Transverse colon (tissue), 4 donors: ENCODE measurements at regions of chr15 and their contacts with region 1.

Region 1: GRCh38 chr15:91782221-91782620 is 71.3 kb upstream of the SLCO3A1 start:
- DNase-seq: no peak
- H3K4me3 ChIP-seq: no peak overlapping the region
- H3K27ac ChIP-seq: no peak overlapping the region
- H3K4me1 ChIP-seq: no peaks in the 10 kb centered on the region
- H3K27me3 ChIP-seq: no peaks in the 10 kb centered on the region
- CTCF ChIP-seq: no peak
- EP300 ChIP-seq: no peak
- POLR2A ChIP-seq: no peak

Region 2: DNA sequence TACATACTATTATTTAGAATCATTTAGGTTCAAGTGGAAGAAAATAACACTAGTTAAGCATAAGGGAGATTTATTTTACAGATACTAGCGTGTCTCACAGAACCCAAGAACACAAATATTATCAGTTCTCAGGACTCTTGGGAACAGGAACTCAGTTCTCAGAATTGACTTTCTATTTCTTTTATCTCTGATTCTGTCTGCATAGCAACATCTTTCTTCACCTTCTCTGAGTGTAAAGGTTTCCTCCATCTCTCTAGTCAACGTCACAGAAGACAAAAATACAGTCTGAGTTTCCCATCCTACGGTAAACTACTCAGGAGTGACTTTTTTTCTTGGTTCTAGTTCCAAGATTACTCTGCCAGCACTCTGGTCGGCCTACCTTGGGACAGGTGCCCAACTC is 462.1 kb before region 1 on chr15:
- in situ Hi-C with region 1: no loop called
- intact Hi-C with region 1: no loop called
- DNase-seq: no peak
- H3K4me3 ChIP-seq: no peak overlapping the region
- H3K27ac ChIP-seq: no peak overlapping the region
- H3K4me1 ChIP-seq: no peaks in the 10 kb centered on the region
- H3K27me3 ChIP-seq: no peaks in the 10 kb centered on the region
- CTCF ChIP-seq: no peak
- EP300 ChIP-seq: no peak
- POLR2A ChIP-seq: no peak

Region 3: DNA sequence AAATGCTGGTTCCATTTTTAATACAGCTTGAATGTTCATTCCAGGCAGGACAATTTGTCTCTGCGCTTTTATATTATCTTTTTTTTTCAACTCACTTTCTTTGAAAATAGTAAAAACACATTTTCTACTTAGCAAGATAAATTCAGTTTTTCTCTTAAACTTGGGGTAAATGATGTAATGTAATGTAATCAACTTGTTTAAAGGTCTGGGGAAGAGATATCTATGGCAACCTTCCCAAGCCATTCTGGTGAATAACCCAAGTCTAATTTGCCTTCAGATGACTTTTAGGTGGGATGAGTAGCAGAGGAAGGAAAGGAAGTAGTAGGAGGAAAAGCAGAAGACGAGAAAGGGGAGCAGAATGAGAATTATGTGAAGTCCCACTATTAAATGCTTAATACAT is 347.1 kb before region 1 on chr15:
- in situ Hi-C with region 1: no loop called
- intact Hi-C with region 1: no loop called
- DNase-seq: no peak
- H3K4me3 ChIP-seq: no peak overlapping the region
- H3K27ac ChIP-seq: no peak overlapping the region
- H3K4me1 ChIP-seq: no peaks in the 10 kb centered on the region
- H3K27me3 ChIP-seq: no peaks in the 10 kb centered on the region
- CTCF ChIP-seq: no peak
- EP300 ChIP-seq: no peak
- POLR2A ChIP-seq: no peak

Region 4: GRCh38 chr15:92155934-92156333 is 373.7 kb after region 1 on chr15:
- in situ Hi-C with region 1: no loop called
- intact Hi-C with region 1: loop called (anchors 2 kb)
- DNase-seq: no peak
- H3K4me3 ChIP-seq: no peak overlapping the region
- H3K27ac ChIP-seq: no peak overlapping the region
- H3K4me1 ChIP-seq: peaks cover 0 to 6% (median 0%) of the 10 kb centered on the region in 4 donors
- H3K27me3 ChIP-seq: no peaks in the 10 kb centered on the region
- CTCF ChIP-seq: no peak
- EP300 ChIP-seq: no peak
- POLR2A ChIP-seq: no peak